HepG2 (cell line): ENCODE measurements at regions of chr1 and their contacts with region 1.

Region 1: GRCh38 chr1:42747125-42747524 is 7.1 kb upstream of the CLDN19 start:
- DNase-seq: no peak
- ATAC-seq: peak; percentile 65
- H3K4me3 ChIP-seq: no peak overlapping the region
- H3K27ac ChIP-seq: no peak overlapping the region
- H3K4me1 ChIP-seq: peaks cover 16% of the 10 kb centered on the region
- H3K27me3 ChIP-seq: no peaks in the 10 kb centered on the region
- CTCF ChIP-seq: peak; percentile 94
- EP300 ChIP-seq: no peak
- POLR2A ChIP-seq: no peak
- RAD21 ChIP-seq: peak; percentile 82

Region 2: GRCh38 chr1:42146626-42147320 is 600.4 kb before region 1 on chr1:
- CTCF ChIA-PET with region 1: no interaction called
- POLR2A ChIA-PET with region 1: no interaction called
- in situ Hi-C with region 1: loop called (anchors 10 kb)
- intact Hi-C with region 1: no loop called
- DNase-seq: peak; percentile 76
- ATAC-seq: peak; percentile 88
- H3K4me3 ChIP-seq: no peak overlapping the region
- H3K27ac ChIP-seq: no peak overlapping the region
- H3K4me1 ChIP-seq: peaks cover 8% of the 10 kb centered on the region; the same call in 1 of the 2 replicates
- H3K27me3 ChIP-seq: peaks cover 3 to 45% of the 10 kb centered on the region in 2 experiments; a peak in 3 of 5 replicates
- CTCF ChIP-seq: peak; percentile 95
- EP300 ChIP-seq: no peak
- POLR2A ChIP-seq: no peak
- RAD21 ChIP-seq: peak; percentile 80

Region 3: DNA sequence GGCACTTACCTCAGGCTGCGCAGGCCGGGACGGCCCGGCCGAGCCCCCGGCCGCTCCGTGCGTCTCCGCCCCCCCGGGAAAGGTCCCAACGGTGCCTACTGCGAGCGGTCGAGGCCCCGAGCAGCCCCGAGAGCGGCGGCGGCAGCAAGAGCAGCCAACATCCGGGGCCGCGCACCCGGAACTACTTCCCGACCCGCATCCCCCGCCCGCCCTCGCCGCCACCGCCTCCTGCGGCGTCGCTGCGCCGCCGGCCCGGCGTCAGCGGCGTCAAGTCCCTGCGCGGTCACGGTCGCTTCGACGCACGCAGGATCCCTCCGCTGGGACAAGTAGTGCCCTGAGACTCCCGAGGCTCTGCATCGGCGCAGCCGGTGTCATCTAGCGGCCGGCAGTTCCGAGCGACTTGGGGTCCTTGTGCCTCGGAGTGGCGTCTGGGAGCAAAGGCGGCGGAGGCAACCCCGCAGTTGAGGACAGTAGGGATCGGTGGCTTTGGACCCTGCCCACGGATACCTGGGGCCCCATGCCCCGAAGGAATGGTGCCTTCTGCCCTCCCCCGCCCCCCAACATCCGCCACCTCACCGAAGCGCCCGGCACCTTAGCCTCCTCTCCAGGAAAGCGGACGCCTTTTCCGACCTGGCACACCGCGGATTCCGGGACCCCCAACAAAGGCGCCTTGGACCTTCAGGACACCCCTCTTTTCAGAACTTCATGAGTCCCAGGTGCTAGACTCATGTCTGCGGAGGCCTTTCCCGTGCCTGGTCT is 411.9 kb before region 1 on chr1 and contains the start of gene FOXJ3:
- CTCF ChIA-PET with region 1: no interaction called
- POLR2A ChIA-PET with region 1: no interaction called
- in situ Hi-C with region 1: loop called (anchors 25 kb)
- intact Hi-C with region 1: loop called (anchors 10 kb)
- DNase-seq: peak; percentile 84
- ATAC-seq: peak; percentile 88
- H3K4me3 ChIP-seq: peak within 1 kb of the TSS; percentile 86 to 97 (median 95)
- H3K27ac ChIP-seq: peak within 1 kb of the TSS; percentile 93
- H3K4me1 ChIP-seq: peaks cover 50% of the 10 kb centered on the region
- H3K27me3 ChIP-seq: no peaks in the 10 kb centered on the region; a peak in 1 of 5 replicates
- CTCF ChIP-seq: peak; percentile 59
- EP300 ChIP-seq: peak in 1 of 2 experiments; percentile 56; a peak in 1 of 4 replicates
- POLR2A ChIP-seq: peak; percentile 84 to 87
- RAD21 ChIP-seq: 0 out of 2 replicates have a peak, but pooled peaks have one; percentile 51
- total RNA-seq, gene FOXJ3: 15.4 and 16.6 TPM in 2 replicates

Region 4: GRCh38 chr1:42518908-42519307 is 228.2 kb before region 1 on chr1:
- CTCF ChIA-PET with region 1: no interaction called
- POLR2A ChIA-PET with region 1: no interaction called
- in situ Hi-C with region 1: no loop called
- intact Hi-C with region 1: loop called (anchors 5 kb)
- DNase-seq: no peak
- ATAC-seq: no peak
- H3K4me3 ChIP-seq: no peak overlapping the region
- H3K27ac ChIP-seq: no peak overlapping the region
- H3K4me1 ChIP-seq: no peaks in the 10 kb centered on the region
- H3K27me3 ChIP-seq: no peaks in the 10 kb centered on the region
- CTCF ChIP-seq: no peak
- EP300 ChIP-seq: no peak
- POLR2A ChIP-seq: no peak
- RAD21 ChIP-seq: no peak

Region 5: GRCh38 chr1:42576935-42577334 is 170.2 kb before region 1 on chr1:
- CTCF ChIA-PET with region 1: interaction called, 17 read pairs
- POLR2A ChIA-PET with region 1: no interaction called
- in situ Hi-C with region 1: loop called (anchors 5 kb)
- intact Hi-C with region 1: loop called (anchors 5 kb)
- DNase-seq: no peak
- ATAC-seq: no peak
- H3K4me3 ChIP-seq: no peak overlapping the region
- H3K27ac ChIP-seq: no peak overlapping the region
- H3K4me1 ChIP-seq: no peaks in the 10 kb centered on the region
- H3K27me3 ChIP-seq: no peaks in the 10 kb centered on the region
- CTCF ChIP-seq: no peak
- EP300 ChIP-seq: no peak
- POLR2A ChIP-seq: no peak
- RAD21 ChIP-seq: no peak

Region 6: GRCh38 chr1:42822800-42823392 is 75.8 kb after region 1 on chr1:
- CTCF ChIA-PET with region 1: no interaction called
- POLR2A ChIA-PET with region 1: no interaction called
- in situ Hi-C with region 1: no loop called
- intact Hi-C with region 1: no loop called
- DNase-seq: no peak
- ATAC-seq: no peak
- H3K4me3 ChIP-seq: no peak overlapping the region
- H3K27ac ChIP-seq: peak overlapping the region; percentile 2
- H3K4me1 ChIP-seq: peaks cover 32% of the 10 kb centered on the region
- H3K27me3 ChIP-seq: no peaks in the 10 kb centered on the region
- CTCF ChIP-seq: no peak
- EP300 ChIP-seq: no peak
- POLR2A ChIP-seq: no peak
- RAD21 ChIP-seq: no peak